Left ventricle myocardium superior (tissue), 1 donor: ENCODE measurements at regions of chr3 and their contacts with region 1.

Region 1: DNA sequence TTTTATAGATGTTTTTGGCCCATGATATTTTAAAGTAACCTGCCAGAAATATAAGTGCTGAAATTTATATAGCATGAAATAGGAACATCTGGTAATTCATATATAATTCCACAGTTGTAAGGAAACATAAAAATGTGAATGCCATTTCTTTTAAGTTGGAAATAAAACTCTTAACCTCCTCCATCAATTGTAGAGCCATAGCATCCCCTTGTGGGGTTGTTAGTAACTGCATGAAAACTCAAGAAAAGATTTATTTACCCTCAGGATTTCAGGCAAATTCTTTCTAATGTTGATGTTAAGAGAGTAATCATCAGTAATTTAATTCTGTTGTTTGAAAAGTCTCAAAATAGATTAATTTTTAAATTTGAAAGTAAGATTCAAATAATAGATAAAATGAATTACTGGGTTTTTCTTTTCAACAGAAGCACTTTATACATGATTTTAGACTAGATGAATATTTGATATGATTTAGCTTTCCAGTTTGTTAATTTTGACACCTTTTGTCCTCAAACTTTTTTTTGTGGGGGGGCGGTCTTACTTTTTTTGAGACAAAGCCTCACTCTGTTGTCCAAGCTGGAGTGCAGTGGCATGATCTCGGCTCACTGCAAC is 74.7 kb downstream of the RASA2 start:
- DNase-seq: no peak
- ATAC-seq: no peak

Region 2: DNA sequence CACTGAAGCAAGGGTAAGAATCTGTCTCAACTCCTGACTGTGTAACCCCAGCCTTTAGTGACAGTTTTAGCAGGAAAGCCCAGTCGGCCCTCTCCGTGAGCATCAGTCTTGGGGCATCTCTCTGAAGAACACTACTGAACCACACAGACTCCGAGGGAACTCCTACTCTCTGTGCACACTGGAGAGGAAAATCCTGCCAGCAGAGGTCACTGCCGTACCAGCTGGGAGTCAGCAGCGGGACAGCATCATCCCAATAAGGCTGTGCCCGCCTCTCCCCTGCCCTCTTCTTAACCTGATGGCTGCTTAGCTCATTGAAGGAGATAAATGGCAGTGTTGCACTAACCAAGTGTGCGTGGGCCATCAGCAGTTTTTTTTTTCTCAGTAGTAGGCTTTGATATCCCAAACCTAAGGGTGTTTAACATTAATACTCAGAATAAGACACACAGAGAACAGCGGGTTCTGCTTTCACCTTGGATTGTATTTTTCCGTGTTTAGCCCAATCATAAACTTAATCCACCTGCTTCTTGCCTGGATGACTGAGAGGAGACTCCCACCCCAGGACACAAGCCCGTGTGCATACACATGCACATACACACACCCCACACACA is 101.3 kb before region 1 on chr3:
- intact Hi-C with region 1: loop called (anchors 5 kb)
- DNase-seq: peak; percentile 89
- ATAC-seq: peak; percentile 97

Region 3: GRCh38 chr3:141471160-141471559 is 90.4 kb before region 1 on chr3:
- intact Hi-C with region 1: loop called (anchors 5 kb)
- DNase-seq: no peak
- ATAC-seq: no peak